CD8-positive, alpha-beta T cell (primary cell): ENCODE measurements at regions of chr14 and their contacts with region 1.

Region 1: GRCh38 chr14:20343092-20343861 is at the start of gene PARP2:
- DNase-seq: peak; percentile 70 to 97 (median 84)
- ATAC-seq: peak; percentile 81
- H3K4me3 ChIP-seq: peak within 1 kb of the TSS; percentile 96 to 98
- H3K4me3 Mint-ChIP-seq: peak within 1 kb of the TSS; percentile 100
- H3K27ac ChIP-seq: peak within 1 kb of the TSS; percentile 79 to 93
- H3K27ac Mint-ChIP-seq: peak within 1 kb of the TSS; percentile 97
- H3K4me1 ChIP-seq: peaks cover 8% of the 10 kb centered on the region
- H3K4me1 Mint-ChIP-seq: peaks cover 18% of the 10 kb centered on the region
- H3K27me3 ChIP-seq: peaks cover 0 to 3% of the 10 kb centered on the region in 2 experiments
- H3K27me3 Mint-ChIP-seq: no peaks in the 10 kb centered on the region
- CTCF ChIP-seq: peak; percentile 14
- total RNA-seq, gene PARP2: 15.9 to 16.5 TPM

Region 2: GRCh38 chr14:20262642-20263128 is 80.6 kb before region 1 on chr14:
- CTCF ChIA-PET with region 1: no interaction called
- POLR2A ChIA-PET with region 1: no interaction called
- intact Hi-C with region 1: no loop called
- DNase-seq: no peak
- ATAC-seq: no peak
- H3K4me3 ChIP-seq: no peak overlapping the region
- H3K4me3 Mint-ChIP-seq: no peak overlapping the region
- H3K27ac ChIP-seq: no peak overlapping the region
- H3K27ac Mint-ChIP-seq: no peak overlapping the region
- H3K4me1 ChIP-seq: no peaks in the 10 kb centered on the region
- H3K4me1 Mint-ChIP-seq: no peaks in the 10 kb centered on the region
- H3K27me3 ChIP-seq: no peaks in the 10 kb centered on the region
- H3K27me3 Mint-ChIP-seq: no peaks in the 10 kb centered on the region
- CTCF ChIP-seq: no peak

Region 3: GRCh38 chr14:20305265-20306078 is 37.8 kb before region 1 on chr14 and contains the start of gene TTC5:
- CTCF ChIA-PET with region 1: no interaction called
- POLR2A ChIA-PET with region 1: no interaction called
- intact Hi-C with region 1: loop called (anchors 1 to 2 kb)
- DNase-seq: peak; percentile 87 to 95 (median 90)
- ATAC-seq: peak; percentile 99
- H3K4me3 ChIP-seq: peak within 1 kb of the TSS; percentile 62 to 77
- H3K4me3 Mint-ChIP-seq: peak within 1 kb of the TSS; percentile 91
- H3K27ac ChIP-seq: peak within 1 kb of the TSS; percentile 48 to 59
- H3K27ac Mint-ChIP-seq: peak within 1 kb of the TSS; percentile 90
- H3K4me1 ChIP-seq: peaks cover 16% of the 10 kb centered on the region
- H3K4me1 Mint-ChIP-seq: peaks cover 32% of the 10 kb centered on the region
- H3K27me3 ChIP-seq: no peaks in the 10 kb centered on the region
- H3K27me3 Mint-ChIP-seq: no peaks in the 10 kb centered on the region
- CTCF ChIP-seq: peak; percentile 93
- total RNA-seq, gene TTC5: 9.2 to 9.9 TPM

Region 4: GRCh38 chr14:20356422-20356821 is 13.1 kb after region 1 on chr14:
- CTCF ChIA-PET with region 1: interaction called, 3 read pairs
- POLR2A ChIA-PET with region 1: interaction called, 15 read pairs
- intact Hi-C with region 1: no loop called
- DNase-seq: no peak
- ATAC-seq: no peak
- H3K4me3 ChIP-seq: no peak overlapping the region
- H3K4me3 Mint-ChIP-seq: no peak overlapping the region
- H3K27ac ChIP-seq: no peak overlapping the region
- H3K27ac Mint-ChIP-seq: peak overlapping the region; percentile 23
- H3K4me1 ChIP-seq: no peaks in the 10 kb centered on the region
- H3K4me1 Mint-ChIP-seq: no peaks in the 10 kb centered on the region
- H3K27me3 ChIP-seq: no peaks in the 10 kb centered on the region
- H3K27me3 Mint-ChIP-seq: no peaks in the 10 kb centered on the region
- CTCF ChIP-seq: no peak

Region 5: GRCh38 chr14:20461274-20462001 is 118.2 kb after region 1 on chr14 and contains the start of gene PIP4P1:
- CTCF ChIA-PET with region 1: no interaction called
- POLR2A ChIA-PET with region 1: interaction called, 11 read pairs
- intact Hi-C with region 1: loop called in 1 of 2 experiments (anchors 1 kb)
- DNase-seq: peak; percentile 95 to 100 (median 97)
- ATAC-seq: peak; percentile 85
- H3K4me3 ChIP-seq: peak within 1 kb of the TSS; percentile 72 to 85
- H3K4me3 Mint-ChIP-seq: peak within 1 kb of the TSS; percentile 92
- H3K27ac ChIP-seq: peak within 1 kb of the TSS; percentile 84 to 95
- H3K27ac Mint-ChIP-seq: peak within 1 kb of the TSS; percentile 96
- H3K4me1 ChIP-seq: peaks cover 26% of the 10 kb centered on the region
- H3K4me1 Mint-ChIP-seq: peaks cover 30% of the 10 kb centered on the region
- H3K27me3 ChIP-seq: no peaks in the 10 kb centered on the region
- H3K27me3 Mint-ChIP-seq: no peaks in the 10 kb centered on the region
- CTCF ChIP-seq: no peak
- total RNA-seq, gene PIP4P1: 87.7 to 105 TPM

Region 6: GRCh38 chr14:20989572-20990551 is 646.6 kb after region 1 on chr14 and contains the start of gene METTL17:
- CTCF ChIA-PET with region 1: no interaction called
- POLR2A ChIA-PET with region 1: no interaction called
- intact Hi-C with region 1: loop called in 1 of 2 experiments (anchors 10 kb)
- DNase-seq: peak; percentile 65 to 94 (median 85)
- ATAC-seq: peak; percentile 92
- H3K4me3 ChIP-seq: peak within 1 kb of the TSS; percentile 92 to 96
- H3K4me3 Mint-ChIP-seq: peak within 1 kb of the TSS; percentile 95
- H3K27ac ChIP-seq: peak within 1 kb of the TSS; percentile 65 to 73
- H3K27ac Mint-ChIP-seq: peak within 1 kb of the TSS; percentile 94
- H3K4me1 ChIP-seq: peaks cover 18% of the 10 kb centered on the region
- H3K4me1 Mint-ChIP-seq: peaks cover 28% of the 10 kb centered on the region
- H3K27me3 ChIP-seq: no peaks in the 10 kb centered on the region
- H3K27me3 Mint-ChIP-seq: no peaks in the 10 kb centered on the region
- CTCF ChIP-seq: peak; percentile 28
- total RNA-seq, gene METTL17: 82.3 to 88.8 TPM